HEK293 (cell line): ENCODE measurements at regions of chrX and their contacts with region 1.

Region 1: DNA sequence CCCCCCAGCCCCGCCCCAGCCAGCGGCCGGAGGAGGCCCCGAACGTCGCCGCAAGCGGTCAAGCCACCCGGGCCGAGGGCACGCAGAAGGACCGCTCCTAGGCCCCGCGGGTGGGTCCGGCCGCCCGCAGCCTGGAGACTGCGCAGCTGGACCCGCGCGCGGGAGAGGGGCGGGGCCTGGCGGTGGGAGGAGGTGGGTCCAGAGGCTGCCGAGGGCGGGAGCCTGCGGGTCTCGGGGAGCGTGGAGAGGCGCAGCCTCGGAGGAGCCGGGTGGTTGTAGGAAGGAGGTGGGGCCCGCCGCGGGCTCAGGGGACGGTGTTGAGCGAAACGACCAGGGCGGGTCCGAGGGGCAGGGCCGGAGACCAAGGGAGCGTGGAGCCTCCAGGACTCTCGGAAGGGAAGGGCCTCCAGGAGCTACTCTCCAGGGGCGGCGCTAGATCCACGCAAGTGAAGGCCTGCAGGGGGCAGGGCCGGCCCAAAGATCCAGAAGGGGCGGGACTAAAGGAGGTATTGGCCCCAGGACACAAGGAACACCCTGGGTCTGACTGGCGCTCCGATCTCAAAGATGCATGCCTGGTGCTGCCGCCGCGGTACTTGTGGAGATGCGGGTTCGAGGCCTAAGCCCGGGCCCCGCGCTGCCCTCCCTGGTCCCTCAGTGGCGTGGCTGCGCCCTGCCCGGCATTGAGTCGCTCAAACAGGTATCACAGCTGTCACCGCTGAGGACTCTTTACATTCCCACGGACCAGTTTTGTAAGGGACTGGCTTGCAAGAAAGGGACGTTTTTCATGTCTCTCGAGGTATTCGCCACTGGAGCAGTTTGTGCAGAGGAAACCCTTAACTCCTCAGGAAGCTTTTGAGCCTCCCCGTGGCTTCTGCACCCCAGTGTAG is 5.9 kb downstream of the TIMM17B start:
- H3K4me3 ChIP-seq: peak overlapping the region; percentile 40
- H3K27ac ChIP-seq: peak overlapping the region; percentile 46; the same call in 1 of the 2 replicates
- H3K4me1 ChIP-seq: no peaks in the 10 kb centered on the region
- CTCF ChIP-seq: peak; percentile 89

Region 2: DNA sequence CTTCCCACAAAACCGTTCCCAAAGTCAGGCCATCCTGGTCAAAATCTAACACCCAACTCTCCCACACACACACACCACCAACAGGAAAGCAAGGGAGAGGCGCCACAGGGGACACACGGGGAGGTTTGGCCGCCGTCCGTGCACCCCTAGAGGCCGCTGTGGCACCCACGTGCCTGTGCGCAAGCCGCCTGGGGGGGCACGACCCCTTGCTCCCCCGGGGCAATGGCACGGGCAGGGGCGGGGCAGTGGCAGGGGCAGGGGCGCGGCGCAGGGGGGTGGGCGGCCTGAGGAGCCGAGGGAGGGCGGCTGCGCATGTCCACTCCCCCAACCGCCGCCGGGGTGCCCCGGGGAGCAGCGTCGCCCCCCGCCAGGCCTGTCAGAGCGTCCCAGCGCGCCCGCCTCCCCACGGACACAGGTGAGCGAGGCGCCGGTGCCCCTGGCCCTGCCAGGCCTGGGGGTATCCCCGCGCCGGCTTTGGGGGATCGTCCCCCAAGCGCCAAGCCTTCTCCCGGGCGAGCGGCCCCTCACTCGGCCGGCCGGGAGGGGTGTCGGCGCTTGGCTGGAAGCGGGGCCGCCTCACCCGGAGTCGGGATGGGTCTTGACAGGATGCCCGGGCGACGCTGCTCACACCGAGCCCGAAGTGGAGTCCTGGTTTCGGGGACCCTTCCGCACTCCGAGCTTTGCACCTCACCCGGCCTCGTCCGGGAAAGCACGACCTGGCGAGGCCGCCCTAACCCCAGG is 65.3 kb before region 1 on chrX and contains the start of gene ERAS:
- CTCF ChIA-PET with region 1: no interaction called
- POLR2A ChIA-PET with region 1: no interaction called
- H3K4me3 ChIP-seq: no peak within 1 kb of the TSS
- H3K27ac ChIP-seq: no peak within 1 kb of the TSS
- H3K4me1 ChIP-seq: no peaks in the 10 kb centered on the region
- CTCF ChIP-seq: no peak

Region 3: GRCh38 chrX:48904626-48905025 is 13.0 kb after region 1 on chrX:
- CTCF ChIA-PET with region 1: interaction called, 3 read pairs
- POLR2A ChIA-PET with region 1: interaction called, 21 read pairs
- H3K4me3 ChIP-seq: no peak overlapping the region
- H3K27ac ChIP-seq: no peak overlapping the region
- H3K4me1 ChIP-seq: no peaks in the 10 kb centered on the region
- CTCF ChIP-seq: no peak

Region 4: GRCh38 chrX:48911412-48912182 is 20.0 kb after region 1 on chrX and contains the start of gene SLC35A2:
- CTCF ChIA-PET with region 1: interaction called, 3 read pairs
- POLR2A ChIA-PET with region 1: interaction called, 21 read pairs
- H3K4me3 ChIP-seq: peak within 1 kb of the TSS; percentile 81
- H3K27ac ChIP-seq: peak within 1 kb of the TSS; percentile 30; the same call in 1 of the 2 replicates
- H3K4me1 ChIP-seq: no peaks in the 10 kb centered on the region
- CTCF ChIP-seq: no peak